WTC11 (cell line): ENCODE measurements at regions of chr19 and their contacts with region 1.

Region 1: DNA sequence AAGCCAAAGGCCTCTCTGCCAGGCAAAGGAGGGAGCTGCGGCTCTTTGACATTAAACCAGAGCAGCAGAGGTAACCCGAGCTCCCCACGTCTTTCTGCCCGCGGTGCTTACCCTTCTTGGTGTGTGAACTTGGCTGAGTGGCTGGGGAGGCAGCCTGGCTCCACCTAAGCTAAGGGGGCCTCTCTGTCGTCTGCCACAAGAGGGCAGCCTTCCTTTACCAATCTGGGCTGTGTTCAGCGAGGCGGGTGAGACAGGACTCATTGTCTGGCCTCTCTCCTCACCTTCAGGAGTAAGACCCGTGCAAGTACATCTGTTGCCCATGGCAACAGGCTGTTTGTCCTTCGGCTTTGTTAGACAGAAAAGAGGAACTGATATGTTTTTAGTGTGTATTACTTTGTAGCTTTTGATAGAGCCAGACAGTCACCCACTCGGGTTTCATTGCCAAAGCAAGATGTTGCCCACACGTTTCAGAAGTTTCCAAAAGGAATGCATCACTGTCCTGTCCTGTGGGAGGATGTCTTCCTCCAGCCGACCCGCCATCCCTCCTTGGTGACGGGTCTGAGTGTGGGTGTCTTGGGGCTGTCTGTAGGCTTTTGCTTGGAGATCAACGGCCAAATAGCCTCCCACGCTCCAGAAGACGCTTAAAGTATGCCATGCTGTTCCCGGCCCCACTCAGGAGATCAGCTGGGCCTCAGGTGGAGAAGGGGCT is 4.6 kb downstream of the POP4 start:
- DNase-seq: peak; percentile 89
- ATAC-seq: peak; percentile 89
- H3K4me3 Mint-ChIP-seq: no peak overlapping the region
- H3K27ac Mint-ChIP-seq: no peak overlapping the region
- H3K4me1 Mint-ChIP-seq: peaks cover 9% of the 10 kb centered on the region
- H3K27me3 Mint-ChIP-seq: peaks cover 3% of the 10 kb centered on the region; the same call in 1 of the 2 replicates
- CTCF ChIP-seq: peak; percentile 54

Region 2: GRCh38 chr19:29379257-29380021 is 231.3 kb before region 1 on chr19:
- CTCF ChIA-PET with region 1: no interaction called
- POLR2A ChIA-PET with region 1: no interaction called
- DNase-seq: no peak
- ATAC-seq: no peak
- H3K4me3 Mint-ChIP-seq: no peak overlapping the region
- H3K27ac Mint-ChIP-seq: no peak overlapping the region
- H3K4me1 Mint-ChIP-seq: peaks cover 35% of the 10 kb centered on the region
- H3K27me3 Mint-ChIP-seq: no peaks in the 10 kb centered on the region; the same call in 1 of the 2 replicates
- CTCF ChIP-seq: no peak

Region 3: GRCh38 chr19:29546583-29547190 is 64.0 kb before region 1 on chr19:
- CTCF ChIA-PET with region 1: no interaction called
- POLR2A ChIA-PET with region 1: no interaction called
- DNase-seq: no peak
- ATAC-seq: no peak
- H3K4me3 Mint-ChIP-seq: no peak overlapping the region
- H3K27ac Mint-ChIP-seq: no peak overlapping the region
- H3K4me1 Mint-ChIP-seq: no peaks in the 10 kb centered on the region
- H3K27me3 Mint-ChIP-seq: no peaks in the 10 kb centered on the region
- CTCF ChIP-seq: no peak

Region 4: GRCh38 chr19:29596885-29597525 is 13.7 kb before region 1 on chr19:
- CTCF ChIA-PET with region 1: interaction called, 14 read pairs
- POLR2A ChIA-PET with region 1: no interaction called
- DNase-seq: no peak
- ATAC-seq: no peak; the same call in 1 of the 2 replicates
- H3K4me3 Mint-ChIP-seq: no peak overlapping the region; the same call in 1 of the 2 replicates
- H3K27ac Mint-ChIP-seq: no peak overlapping the region
- H3K4me1 Mint-ChIP-seq: peaks cover 21% of the 10 kb centered on the region
- H3K27me3 Mint-ChIP-seq: peaks cover 35% of the 10 kb centered on the region
- CTCF ChIP-seq: no peak

Region 5: GRCh38 chr19:29622138-29623070 is 11.7 kb after region 1 on chr19:
- CTCF ChIA-PET with region 1: interaction called, 20 read pairs
- POLR2A ChIA-PET with region 1: interaction called, 4 read pairs
- DNase-seq: no peak
- ATAC-seq: no peak
- H3K4me3 Mint-ChIP-seq: no peak overlapping the region
- H3K27ac Mint-ChIP-seq: no peak overlapping the region
- H3K4me1 Mint-ChIP-seq: peaks cover 8% of the 10 kb centered on the region
- H3K27me3 Mint-ChIP-seq: no peaks in the 10 kb centered on the region; the same call in 1 of the 2 replicates
- CTCF ChIP-seq: no peak

Region 6: DNA sequence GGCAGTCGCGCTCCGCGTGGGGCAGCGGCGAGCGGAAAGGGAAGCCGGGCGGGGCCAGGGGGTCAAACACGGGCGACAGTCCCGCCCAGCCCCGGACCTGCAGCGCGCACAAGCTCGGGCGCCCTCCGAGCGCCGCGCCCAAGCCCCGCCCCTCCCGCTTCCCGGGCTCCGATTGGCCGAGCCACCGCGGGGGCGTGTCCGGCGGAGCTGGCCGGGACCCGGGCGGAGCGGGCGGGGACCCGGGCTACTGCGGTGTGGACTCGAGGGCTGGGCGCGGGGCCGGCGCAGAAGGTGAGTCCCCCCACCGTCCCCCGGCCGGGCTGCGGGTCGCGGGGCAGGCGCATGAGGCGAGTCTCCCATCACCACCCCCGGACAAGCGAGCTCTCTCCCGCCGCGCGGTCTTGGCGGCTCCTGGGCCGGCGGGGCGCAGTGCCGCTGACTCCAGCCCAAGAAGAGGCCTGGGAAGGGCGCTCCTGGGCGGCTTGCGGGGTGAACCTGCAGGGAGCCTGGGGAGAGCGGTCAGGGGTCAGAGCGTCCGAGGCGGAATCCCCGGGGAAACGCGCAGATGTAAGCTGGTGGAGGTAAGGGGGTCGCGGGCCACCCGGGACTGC is 54.6 kb after region 1 on chr19 and contains the start of gene PLEKHF1:
- CTCF ChIA-PET with region 1: interaction called, 34 read pairs
- POLR2A ChIA-PET with region 1: interaction called, 11 read pairs
- DNase-seq: peak; percentile 90
- ATAC-seq: peak; percentile 77
- H3K4me3 Mint-ChIP-seq: peak within 1 kb of the TSS; percentile 77
- H3K27ac Mint-ChIP-seq: peak within 1 kb of the TSS; percentile 98
- H3K4me1 Mint-ChIP-seq: peaks cover 37% of the 10 kb centered on the region
- H3K27me3 Mint-ChIP-seq: no peaks in the 10 kb centered on the region
- CTCF ChIP-seq: no peak
- total RNA-seq, gene PLEKHF1: 10.8 to 17.9 TPM (median 14.0 TPM) in 3 replicates

Region 7: GRCh38 chr19:29671393-29672160 is 60.9 kb after region 1 on chr19:
- CTCF ChIA-PET with region 1: interaction called, 34 read pairs
- POLR2A ChIA-PET with region 1: interaction called, 11 read pairs
- DNase-seq: no peak
- ATAC-seq: peak; percentile 18
- H3K4me3 Mint-ChIP-seq: no peak overlapping the region
- H3K27ac Mint-ChIP-seq: peak overlapping the region; percentile 47
- H3K4me1 Mint-ChIP-seq: peaks cover 31% of the 10 kb centered on the region
- H3K27me3 Mint-ChIP-seq: no peaks in the 10 kb centered on the region
- CTCF ChIP-seq: no peak

Region 8: DNA sequence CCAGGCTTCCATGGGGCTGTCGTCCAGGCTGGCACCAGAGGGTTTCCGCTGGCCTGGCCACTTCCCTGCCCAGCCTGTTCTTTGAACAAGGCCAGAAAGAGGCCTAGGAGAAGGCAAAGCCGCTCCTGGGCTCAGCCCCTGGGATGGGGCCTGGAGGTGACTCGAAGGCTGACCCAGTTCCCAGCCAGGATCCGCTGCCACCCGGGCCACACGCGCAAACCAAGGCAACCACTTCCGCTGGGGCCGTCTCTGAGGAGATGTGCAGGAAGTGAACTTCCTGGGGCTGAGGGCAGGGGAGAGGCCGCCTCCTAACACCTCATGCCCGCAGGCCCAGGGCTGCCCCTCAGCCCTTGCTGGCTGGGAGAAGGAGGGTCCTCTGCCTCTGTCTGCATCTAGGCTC is 69.7 kb after region 1 on chr19:
- CTCF ChIA-PET with region 1: interaction called, 10 read pairs
- POLR2A ChIA-PET with region 1: interaction called, 5 read pairs
- DNase-seq: no peak
- ATAC-seq: no peak
- H3K4me3 Mint-ChIP-seq: no peak overlapping the region
- H3K27ac Mint-ChIP-seq: no peak overlapping the region
- H3K4me1 Mint-ChIP-seq: peaks cover 5% of the 10 kb centered on the region
- H3K27me3 Mint-ChIP-seq: no peaks in the 10 kb centered on the region
- CTCF ChIP-seq: no peak

Region 9: DNA sequence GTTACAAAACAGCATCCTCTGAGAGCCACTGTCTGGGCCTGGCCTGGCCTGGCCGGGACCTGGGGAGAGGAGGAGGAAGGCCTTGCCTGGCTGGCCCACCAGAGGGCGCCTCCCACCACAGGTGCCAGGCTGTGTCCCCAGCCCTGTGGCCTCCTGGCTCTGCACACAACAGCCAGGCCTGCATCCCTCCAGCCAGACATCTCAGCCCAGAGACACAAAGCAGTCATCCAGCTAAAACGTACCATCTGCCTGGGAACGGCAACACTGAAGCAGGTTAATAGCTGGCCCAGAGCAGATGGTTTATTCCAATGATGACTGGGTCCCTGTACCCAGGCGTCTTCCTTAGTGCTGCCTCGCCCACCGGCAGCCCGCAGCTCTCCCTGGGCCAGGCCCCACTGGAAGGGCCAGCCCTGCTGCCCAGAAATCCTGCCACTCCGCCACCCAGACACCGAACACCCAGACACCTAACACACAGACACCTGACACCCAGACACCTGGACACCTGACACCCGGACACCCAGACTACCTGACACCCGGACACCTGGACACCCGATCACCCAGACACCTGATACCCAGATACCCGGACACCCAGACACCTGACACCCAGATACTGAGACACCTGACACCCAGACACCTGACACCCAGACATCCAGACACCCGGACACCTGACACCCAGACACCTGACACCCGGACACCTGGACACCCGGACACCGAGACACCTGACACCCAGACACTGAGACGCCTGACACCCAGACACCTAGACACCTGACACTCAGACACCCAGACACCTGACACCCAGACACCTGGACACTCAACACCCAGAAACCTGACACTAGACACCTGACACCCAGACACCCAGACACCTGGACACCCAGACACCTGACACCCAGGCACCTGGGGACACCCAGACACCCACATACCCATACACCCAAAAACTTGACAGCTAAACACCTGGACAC is 84.2 kb after region 1 on chr19:
- CTCF ChIA-PET with region 1: interaction called, 26 read pairs
- POLR2A ChIA-PET with region 1: no interaction called
- DNase-seq: peak; percentile 87
- ATAC-seq: peak; percentile 97
- H3K4me3 Mint-ChIP-seq: no peak overlapping the region
- H3K27ac Mint-ChIP-seq: no peak overlapping the region
- H3K4me1 Mint-ChIP-seq: peaks cover 2% of the 10 kb centered on the region; the same call in 1 of the 2 replicates
- H3K27me3 Mint-ChIP-seq: no peaks in the 10 kb centered on the region
- CTCF ChIP-seq: peak; percentile 72

Region 10: DNA sequence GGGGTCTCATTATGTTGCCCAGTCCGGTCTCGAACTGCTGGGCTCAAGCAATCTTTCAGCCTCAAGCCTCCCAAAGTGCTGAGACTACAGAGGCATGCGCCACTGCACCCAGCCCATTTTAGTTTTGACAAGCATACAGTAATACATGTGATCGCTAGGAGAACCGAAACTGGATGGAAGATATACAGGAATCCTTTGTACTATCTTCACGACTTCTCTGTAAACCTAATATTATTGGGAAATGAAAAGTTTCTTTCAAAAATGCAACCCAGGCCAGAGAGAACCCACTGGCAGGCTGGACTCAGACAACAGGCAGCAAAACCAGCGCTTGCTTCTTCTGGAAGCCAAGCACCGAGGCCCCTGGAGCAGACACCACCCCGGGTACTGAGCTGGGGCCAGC is 95.0 kb after region 1 on chr19:
- CTCF ChIA-PET with region 1: no interaction called
- POLR2A ChIA-PET with region 1: no interaction called
- DNase-seq: no peak
- ATAC-seq: no peak
- H3K4me3 Mint-ChIP-seq: no peak overlapping the region
- H3K27ac Mint-ChIP-seq: no peak overlapping the region
- H3K4me1 Mint-ChIP-seq: no peaks in the 10 kb centered on the region
- H3K27me3 Mint-ChIP-seq: no peaks in the 10 kb centered on the region
- CTCF ChIP-seq: no peak